CD4-positive, alpha-beta T cell (primary cell): ENCODE measurements at regions of chr1 and their contacts with region 1.

Region 1: DNA sequence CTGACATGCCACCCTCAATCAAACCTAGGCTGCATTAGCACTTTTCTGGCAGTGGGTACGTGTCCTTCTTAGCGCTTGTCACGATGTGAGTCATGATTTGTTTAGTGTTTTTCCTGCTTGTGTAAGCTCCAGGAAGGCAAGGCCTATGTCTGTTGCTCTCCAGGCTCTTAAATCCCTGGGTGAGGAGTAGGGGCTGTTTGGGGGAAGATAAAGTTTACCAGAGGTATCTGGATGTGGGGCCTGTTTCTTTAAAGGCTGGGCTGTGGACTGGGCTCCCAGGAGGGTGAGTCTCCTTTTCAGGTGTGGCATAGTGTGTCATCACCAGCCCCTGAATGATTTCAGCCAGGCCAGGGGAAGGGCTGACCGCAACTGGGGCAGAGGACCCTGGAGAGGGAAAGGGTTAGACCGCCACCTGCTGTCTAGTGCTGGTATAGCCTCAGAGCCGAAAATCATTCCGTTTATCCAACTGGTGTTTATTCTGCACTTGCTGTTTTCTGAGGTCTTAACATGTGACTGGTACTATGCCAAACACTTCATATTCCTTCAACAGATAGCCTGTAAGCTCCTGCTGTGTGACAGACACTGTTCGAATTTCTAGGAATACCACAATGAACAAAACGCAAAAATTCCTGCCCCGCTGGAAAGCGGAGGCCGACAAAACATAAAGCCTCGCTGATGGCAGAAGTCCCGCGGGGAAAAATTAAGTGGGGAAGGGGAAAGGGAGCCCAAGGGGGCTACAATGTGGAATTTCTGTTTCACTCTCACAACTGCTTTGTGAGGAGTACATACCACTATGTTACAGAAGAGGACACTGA is 9.7 kb downstream of the SERINC2 start:
- DNase-seq: peak; percentile 28 to 77 (median 56)
- ATAC-seq: peak; percentile 62
- H3K4me3 ChIP-seq: no peak overlapping the region
- H3K4me3 Mint-ChIP-seq: no peak overlapping the region
- H3K27ac ChIP-seq: no peak overlapping the region
- H3K27ac Mint-ChIP-seq: no peak overlapping the region
- H3K4me1 ChIP-seq: peaks cover 3% of the 10 kb centered on the region
- H3K4me1 Mint-ChIP-seq: no peaks in the 10 kb centered on the region
- H3K27me3 ChIP-seq: peaks cover 7 to 17% of the 10 kb centered on the region in 2 experiments
- H3K27me3 Mint-ChIP-seq: peaks cover 43% of the 10 kb centered on the region
- CTCF ChIP-seq: peak; percentile 92

Region 2: GRCh38 chr1:30801771-30802198 is 620.9 kb before region 1 on chr1:
- CTCF ChIA-PET with region 1: no interaction called
- POLR2A ChIA-PET with region 1: no interaction called
- intact Hi-C with region 1: loop called (anchors 1 to 5 kb)
- DNase-seq: peak; percentile 61 to 88 (median 78)
- ATAC-seq: peak; percentile 83
- H3K4me3 ChIP-seq: no peak overlapping the region
- H3K4me3 Mint-ChIP-seq: no peak overlapping the region
- H3K27ac ChIP-seq: no peak overlapping the region
- H3K27ac Mint-ChIP-seq: no peak overlapping the region
- H3K4me1 ChIP-seq: peaks cover 6% of the 10 kb centered on the region
- H3K4me1 Mint-ChIP-seq: no peaks in the 10 kb centered on the region
- H3K27me3 ChIP-seq: peaks cover 14 to 21% of the 10 kb centered on the region in 2 experiments
- H3K27me3 Mint-ChIP-seq: peaks cover 41% of the 10 kb centered on the region
- CTCF ChIP-seq: peak; percentile 98

Region 3: DNA sequence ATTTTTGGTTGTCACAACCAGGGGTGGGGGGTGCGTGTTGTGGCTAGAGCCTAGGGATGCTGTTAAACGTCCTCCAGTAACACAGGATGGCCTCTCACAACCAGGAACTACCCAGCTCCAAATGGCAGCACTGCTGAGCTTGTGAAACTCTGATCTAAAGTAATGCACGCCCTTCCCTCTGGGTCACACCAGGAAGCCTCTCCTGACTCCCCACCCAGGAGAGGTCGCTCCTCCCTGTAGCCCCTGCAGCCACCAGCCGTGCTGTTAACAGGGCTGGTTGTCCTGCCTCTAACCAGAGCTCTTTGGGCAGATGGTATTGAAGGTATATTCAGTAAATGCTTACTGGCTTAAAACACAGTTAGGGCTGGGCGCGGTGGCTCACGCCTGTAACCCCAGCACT is 256.2 kb before region 1 on chr1:
- CTCF ChIA-PET with region 1: no interaction called
- POLR2A ChIA-PET with region 1: no interaction called
- intact Hi-C with region 1: loop called (anchors 1 to 2 kb)
- DNase-seq: no peak
- ATAC-seq: no peak
- H3K4me3 ChIP-seq: no peak overlapping the region
- H3K4me3 Mint-ChIP-seq: no peak overlapping the region
- H3K27ac ChIP-seq: no peak overlapping the region
- H3K27ac Mint-ChIP-seq: no peak overlapping the region
- H3K4me1 ChIP-seq: peaks cover 10% of the 10 kb centered on the region
- H3K4me1 Mint-ChIP-seq: no peaks in the 10 kb centered on the region
- H3K27me3 ChIP-seq: no peaks in the 10 kb centered on the region
- H3K27me3 Mint-ChIP-seq: peaks cover 9% of the 10 kb centered on the region
- CTCF ChIP-seq: no peak

Region 4: GRCh38 chr1:31182352-31182751 is 240.4 kb before region 1 on chr1:
- CTCF ChIA-PET with region 1: no interaction called
- POLR2A ChIA-PET with region 1: no interaction called
- intact Hi-C with region 1: loop called in 1 of 2 experiments (anchors 1 kb)
- DNase-seq: peak; percentile 16 to 69 (median 38)
- ATAC-seq: peak; percentile 56
- H3K4me3 ChIP-seq: no peak overlapping the region
- H3K4me3 Mint-ChIP-seq: no peak overlapping the region
- H3K27ac ChIP-seq: no peak overlapping the region
- H3K27ac Mint-ChIP-seq: no peak overlapping the region
- H3K4me1 ChIP-seq: peaks cover 12% of the 10 kb centered on the region
- H3K4me1 Mint-ChIP-seq: peaks cover 4% of the 10 kb centered on the region
- H3K27me3 ChIP-seq: peaks cover 33 to 38% of the 10 kb centered on the region in 2 experiments
- H3K27me3 Mint-ChIP-seq: peaks cover 70% of the 10 kb centered on the region
- CTCF ChIP-seq: no peak

Region 5: GRCh38 chr1:31394628-31395193 is 28.0 kb before region 1 on chr1:
- CTCF ChIA-PET with region 1: interaction called, 4 read pairs
- POLR2A ChIA-PET with region 1: interaction called, 3 read pairs
- intact Hi-C with region 1: loop called (anchors 1 kb)
- DNase-seq: peak; percentile 57 to 86 (median 70)
- ATAC-seq: peak; percentile 96
- H3K4me3 ChIP-seq: peak overlapping the region; percentile 52
- H3K4me3 Mint-ChIP-seq: peak overlapping the region; percentile 84
- H3K27ac ChIP-seq: no peak overlapping the region
- H3K27ac Mint-ChIP-seq: no peak overlapping the region
- H3K4me1 ChIP-seq: peaks cover 10% of the 10 kb centered on the region
- H3K4me1 Mint-ChIP-seq: peaks cover 8% of the 10 kb centered on the region
- H3K27me3 ChIP-seq: no peaks in the 10 kb centered on the region
- H3K27me3 Mint-ChIP-seq: peaks cover 4% of the 10 kb centered on the region
- CTCF ChIP-seq: peak; percentile 82

Region 6: GRCh38 chr1:31811583-31811982 is 388.9 kb after region 1 on chr1:
- CTCF ChIA-PET with region 1: no interaction called
- POLR2A ChIA-PET with region 1: no interaction called
- intact Hi-C with region 1: no loop called
- DNase-seq: no peak
- ATAC-seq: no peak
- H3K4me3 ChIP-seq: no peak overlapping the region
- H3K4me3 Mint-ChIP-seq: no peak overlapping the region
- H3K27ac ChIP-seq: no peak overlapping the region
- H3K27ac Mint-ChIP-seq: no peak overlapping the region
- H3K4me1 ChIP-seq: peaks cover 9% of the 10 kb centered on the region
- H3K4me1 Mint-ChIP-seq: peaks cover 9% of the 10 kb centered on the region
- H3K27me3 ChIP-seq: no peaks in the 10 kb centered on the region
- H3K27me3 Mint-ChIP-seq: no peaks in the 10 kb centered on the region
- CTCF ChIP-seq: no peak

Region 7: DNA sequence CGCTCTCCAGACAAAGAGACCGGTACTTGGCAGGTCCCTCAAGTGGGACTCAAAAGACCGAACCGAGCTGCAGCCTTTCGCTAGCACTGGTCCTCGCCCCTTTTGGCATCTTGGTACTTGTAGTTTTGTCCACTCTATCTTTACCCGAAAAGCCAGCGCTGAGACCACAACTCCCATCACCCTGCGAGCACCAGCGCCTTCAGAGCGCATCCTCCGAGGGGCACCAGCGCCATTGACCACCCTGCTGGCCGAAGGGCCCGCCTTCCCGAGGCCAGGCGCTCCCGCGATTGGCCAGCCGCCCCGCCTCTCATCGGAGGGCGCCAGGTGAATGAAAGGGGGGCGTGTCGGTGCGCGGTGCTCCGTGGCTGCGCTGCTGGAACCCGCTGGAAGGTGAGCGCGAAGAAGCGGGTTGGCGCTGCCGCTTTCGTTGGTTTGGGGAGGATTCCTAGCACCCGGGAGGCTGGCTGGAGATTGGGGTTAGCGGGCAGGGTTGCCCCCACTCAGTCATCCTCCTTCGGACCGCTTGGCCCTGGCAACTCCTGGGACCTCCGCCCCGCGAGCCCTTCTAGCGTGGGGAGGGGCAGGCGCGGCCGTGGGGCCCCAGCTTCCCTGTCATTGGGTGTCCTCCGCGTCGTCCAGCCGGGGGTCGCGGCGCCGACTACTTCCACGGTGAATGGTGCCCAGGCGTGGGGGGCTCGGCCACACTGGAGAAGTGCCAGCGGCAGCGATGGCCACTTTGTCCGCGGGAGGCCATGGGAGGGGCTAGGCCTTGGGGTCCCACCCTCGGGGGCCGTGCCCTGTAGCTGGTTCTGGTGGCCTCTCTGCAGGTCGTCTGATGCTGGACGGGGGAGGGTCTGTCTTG is 1042.2 kb after region 1 on chr1 and contains the start of gene ZBTB8B:
- CTCF ChIA-PET with region 1: no interaction called
- POLR2A ChIA-PET with region 1: no interaction called
- intact Hi-C with region 1: no loop called
- DNase-seq: peak in 9 of 14 experiments; percentile 4 to 27 (median 11)
- ATAC-seq: peak; percentile 55
- H3K4me3 ChIP-seq: peak within 1 kb of the TSS; percentile 27
- H3K4me3 Mint-ChIP-seq: peak within 1 kb of the TSS; percentile 78
- H3K27ac ChIP-seq: no peak within 1 kb of the TSS
- H3K27ac Mint-ChIP-seq: no peak within 1 kb of the TSS
- H3K4me1 ChIP-seq: peaks cover 17% of the 10 kb centered on the region
- H3K4me1 Mint-ChIP-seq: peaks cover 15% of the 10 kb centered on the region
- H3K27me3 ChIP-seq: peaks cover 41 to 62% of the 10 kb centered on the region in 2 experiments
- H3K27me3 Mint-ChIP-seq: peaks cover 72% of the 10 kb centered on the region
- CTCF ChIP-seq: no peak
- total RNA-seq, gene ZBTB8B: not detected

Region 8: DNA sequence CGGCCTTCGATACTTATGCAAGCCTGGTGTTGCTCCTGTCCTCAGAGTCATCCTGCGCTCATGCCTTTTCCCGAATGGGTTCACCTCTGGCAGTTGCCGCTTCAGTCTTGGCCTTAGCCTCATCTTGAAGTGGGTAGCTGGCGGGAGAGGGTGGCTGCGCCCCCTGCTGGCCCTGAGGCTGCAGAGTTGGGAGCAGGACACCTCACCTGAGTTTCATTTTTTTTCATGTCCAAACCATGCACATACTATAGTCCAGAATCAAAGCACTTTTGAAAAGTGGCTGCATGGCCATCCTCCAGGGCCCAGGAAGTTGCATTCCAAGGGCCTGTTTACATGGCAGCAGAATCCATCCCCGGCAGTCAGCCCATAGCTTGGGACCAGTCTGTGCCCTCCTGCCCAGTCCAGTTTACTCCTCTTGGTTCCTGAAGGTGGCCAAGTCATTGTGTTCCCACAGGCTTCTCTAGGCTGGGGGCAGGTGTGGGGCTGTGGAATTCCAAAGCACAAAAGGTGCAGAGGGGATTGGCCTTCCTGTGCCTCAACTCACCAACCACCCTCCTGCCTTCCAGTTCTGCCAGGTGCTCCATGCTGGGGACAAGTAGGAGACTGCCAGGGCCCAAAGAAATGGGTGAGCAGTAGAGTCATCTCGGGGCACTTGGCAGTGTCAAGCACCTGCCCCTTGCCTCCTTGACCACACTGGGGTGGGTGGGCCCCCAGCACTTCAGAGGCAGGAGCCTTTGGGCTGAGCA is 1350.5 kb after region 1 on chr1:
- CTCF ChIA-PET with region 1: no interaction called
- POLR2A ChIA-PET with region 1: no interaction called
- intact Hi-C with region 1: no loop called
- DNase-seq: peak; percentile 59 to 85 (median 71)
- ATAC-seq: peak; percentile 89
- H3K4me3 ChIP-seq: no peak overlapping the region
- H3K4me3 Mint-ChIP-seq: no peak overlapping the region
- H3K27ac ChIP-seq: no peak overlapping the region
- H3K27ac Mint-ChIP-seq: no peak overlapping the region
- H3K4me1 ChIP-seq: peaks cover 8% of the 10 kb centered on the region
- H3K4me1 Mint-ChIP-seq: peaks cover 5% of the 10 kb centered on the region
- H3K27me3 ChIP-seq: no peaks in the 10 kb centered on the region
- H3K27me3 Mint-ChIP-seq: no peaks in the 10 kb centered on the region
- CTCF ChIP-seq: peak; percentile 87